ENCODE measurements at regions of chr3 and their contacts with region 1.

Region 1: GRCh38 chr3:132499071-132499470 is 81.8 kb downstream of the DNAJC13 start:
- DNase-seq: no peak
- H3K4me3 ChIP-seq: no peak overlapping the region
- H3K27ac ChIP-seq: no peak overlapping the region
- H3K4me1 ChIP-seq: no peaks in the 10 kb centered on the region
- H3K27me3 ChIP-seq: no peaks in the 10 kb centered on the region
- CTCF ChIP-seq: no peak
- POLR2A ChIP-seq: no peak

Region 2: DNA sequence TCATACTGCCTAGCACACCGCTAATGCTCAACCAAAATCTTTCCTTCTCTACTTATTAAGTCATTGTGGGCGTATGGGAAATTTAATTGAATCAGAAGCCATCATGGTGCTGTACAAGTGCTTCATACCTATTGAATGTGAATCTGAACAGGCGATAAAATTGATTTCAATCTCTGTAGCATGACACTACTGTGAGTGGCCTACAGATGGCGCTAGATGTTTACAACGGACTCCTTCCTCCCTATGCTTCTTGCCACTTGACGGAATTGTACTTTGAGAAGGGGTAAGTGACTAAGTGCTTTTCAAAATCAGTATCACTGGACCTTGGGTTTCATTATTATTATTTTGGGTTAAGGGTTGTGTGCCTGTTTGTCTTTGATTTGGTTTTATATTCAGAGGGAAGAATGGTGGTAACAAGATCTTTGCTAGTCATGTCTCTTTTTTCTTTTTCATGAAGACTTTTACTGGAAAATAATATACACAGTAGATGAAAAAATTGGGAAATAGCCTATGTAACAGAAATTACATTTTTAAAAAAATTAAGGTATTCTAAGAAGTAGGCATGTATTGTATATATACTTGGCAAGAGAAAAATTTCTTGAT is 146.4 kb before region 1 on chr3:
- CTCF ChIA-PET with region 1: no interaction called
- POLR2A ChIA-PET with region 1: no interaction called
- dilution Hi-C with region 1: no loop called
- intact Hi-C with region 1: loop called (anchors 10 kb)
- DNase-seq: peak; percentile 77
- H3K4me3 ChIP-seq: no peak overlapping the region
- H3K27ac ChIP-seq: no peak overlapping the region
- H3K4me1 ChIP-seq: no peaks in the 10 kb centered on the region
- H3K27me3 ChIP-seq: peaks cover 0 to 4% of the 10 kb centered on the region in 2 experiments
- CTCF ChIP-seq: peak; percentile 78 to 84
- POLR2A ChIP-seq: no peak